PC-9 (cell line): ENCODE measurements at regions of chr1 and their contacts with region 1.

Region 1: GRCh38 chr1:211476200-211476849 is 15.6 kb downstream of the RD3 start:
- DNase-seq: peak in 1 of 2 experiments; percentile 66
- H3K4me3 ChIP-seq: no peak overlapping the region
- H3K27ac ChIP-seq: no peak overlapping the region
- H3K4me1 ChIP-seq: no peaks in the 10 kb centered on the region
- H3K27me3 ChIP-seq: no peaks in the 10 kb centered on the region
- CTCF ChIP-seq: peak; percentile 88

Region 2: DNA sequence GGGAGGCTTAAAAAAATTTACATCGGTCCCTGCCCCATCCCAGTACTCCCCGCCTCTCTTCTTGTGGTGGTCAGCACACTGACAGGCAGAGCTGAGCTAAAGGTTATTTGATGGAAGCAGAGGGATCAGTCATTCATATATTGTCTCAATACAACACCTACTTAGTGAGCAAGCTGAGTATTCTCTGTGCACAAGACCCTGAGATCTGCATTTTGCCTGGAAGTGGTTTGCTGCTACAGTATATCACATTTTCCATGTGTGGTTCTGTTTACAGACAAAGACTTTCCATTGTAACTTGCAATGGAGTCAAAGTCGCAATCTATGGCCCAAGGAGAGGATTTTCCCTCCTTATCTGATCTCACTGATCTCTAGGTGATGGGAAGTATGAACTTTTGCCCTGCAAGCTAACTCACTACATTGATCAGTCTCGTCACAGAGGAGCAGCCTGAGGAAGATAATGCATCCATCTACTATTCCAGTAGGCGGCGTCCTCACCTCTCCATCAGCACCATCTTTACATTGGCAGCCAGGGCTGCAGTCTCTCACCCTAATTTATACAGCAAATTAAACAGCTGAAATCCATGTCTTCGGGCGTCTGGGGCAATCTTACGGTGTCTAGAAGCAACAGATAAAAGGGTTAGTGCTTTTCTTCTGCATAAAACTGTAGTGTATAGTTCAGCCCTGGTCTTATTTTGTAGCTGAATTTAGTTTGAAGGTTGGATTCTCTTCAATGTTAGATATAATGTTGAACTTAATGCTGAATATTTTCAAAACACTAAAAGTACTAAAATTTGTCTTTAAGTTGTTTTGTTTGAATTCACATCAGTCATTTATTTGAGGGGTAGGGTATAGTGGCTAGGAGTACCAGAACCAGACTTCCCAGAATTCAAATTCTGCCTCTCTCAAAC is 152.9 kb before region 1 on chr1:
- CTCF ChIA-PET with region 1: interaction called, 3 read pairs
- POLR2A ChIA-PET with region 1: no interaction called
- intact Hi-C with region 1: loop called (anchors 1 kb)
- DNase-seq: peak in 1 of 2 experiments; percentile 59
- H3K4me3 ChIP-seq: no peak overlapping the region
- H3K27ac ChIP-seq: no peak overlapping the region
- H3K4me1 ChIP-seq: peaks cover 9% of the 10 kb centered on the region
- H3K27me3 ChIP-seq: no peaks in the 10 kb centered on the region
- CTCF ChIP-seq: peak; percentile 89

Region 3: DNA sequence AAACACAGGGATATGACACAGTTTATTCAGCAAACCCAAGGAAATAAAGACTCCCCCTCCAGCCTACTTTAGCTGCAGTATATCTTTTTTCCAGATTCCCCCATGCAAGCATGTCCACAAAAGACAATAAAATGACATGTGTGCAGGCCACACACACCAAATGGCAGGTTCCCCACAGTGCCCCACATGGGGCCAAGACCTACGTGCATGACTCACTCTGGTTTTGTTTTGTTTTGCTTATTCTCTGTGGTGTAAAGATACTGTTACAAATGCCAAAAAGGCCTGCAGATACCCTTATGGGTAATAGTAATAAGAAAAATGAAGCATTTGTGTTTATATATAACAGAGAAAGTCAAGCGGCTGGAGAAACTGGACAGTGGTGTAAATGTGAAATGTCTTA is 55.9 kb before region 1 on chr1:
- CTCF ChIA-PET with region 1: no interaction called
- POLR2A ChIA-PET with region 1: no interaction called
- intact Hi-C with region 1: no loop called
- DNase-seq: no peak
- H3K4me3 ChIP-seq: no peak overlapping the region
- H3K27ac ChIP-seq: no peak overlapping the region
- H3K4me1 ChIP-seq: no peaks in the 10 kb centered on the region
- H3K27me3 ChIP-seq: no peaks in the 10 kb centered on the region
- CTCF ChIP-seq: no peak